Left cardiac atrium (tissue), 4 donors: ENCODE measurements at regions of chr3 and their contacts with region 1.

Region 1: DNA sequence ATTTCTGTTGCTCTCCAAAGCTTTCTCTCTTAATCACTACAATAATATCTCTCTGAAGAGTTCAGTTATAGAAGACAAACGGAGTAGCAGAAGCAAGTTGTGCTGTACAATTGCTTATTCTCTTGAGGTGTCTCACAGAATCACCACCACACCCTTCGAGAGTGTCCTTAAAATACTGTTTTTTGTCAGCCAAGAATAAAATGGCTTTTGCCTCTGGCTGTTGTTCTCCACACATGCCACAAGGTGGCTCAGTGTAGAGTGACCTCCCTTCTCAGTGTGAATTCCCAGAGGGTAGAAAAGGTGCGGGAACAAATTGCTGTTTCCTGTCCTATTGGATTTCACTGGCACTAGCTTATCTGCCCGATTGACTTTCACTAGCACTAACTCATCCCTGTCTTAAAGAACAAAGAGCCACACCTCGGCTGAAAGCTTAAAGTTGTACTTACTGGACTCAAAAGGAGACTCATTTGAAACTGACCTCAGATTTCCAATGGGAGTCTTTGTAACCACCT is 134.2 kb upstream of the SATB1 start:
- DNase-seq: no peak
- ATAC-seq: peak; percentile 38 to 59

Region 2: GRCh38 chr3:18512007-18512406 is 47.4 kb before region 1 on chr3:
- intact Hi-C with region 1: no loop called
- DNase-seq: no peak
- ATAC-seq: no peak

Region 3: DNA sequence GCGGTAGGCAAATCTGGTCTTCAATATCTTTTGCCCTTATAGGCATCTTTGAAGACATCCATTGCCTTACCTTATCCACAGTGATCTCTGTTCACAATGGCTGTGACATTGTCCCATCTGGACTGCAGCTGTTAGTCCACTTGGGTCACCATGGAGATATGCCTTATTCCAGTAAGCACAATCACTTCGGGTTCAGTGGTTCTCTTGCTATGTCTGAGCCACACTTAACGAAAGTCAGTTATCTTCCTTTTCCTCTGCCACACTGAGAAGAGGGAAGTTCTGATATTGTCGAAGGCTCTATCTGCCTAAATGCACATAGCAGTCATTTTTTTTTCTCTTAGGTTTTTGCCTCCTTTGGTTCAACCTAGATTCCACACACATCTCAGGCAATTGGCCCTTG is 15.2 kb before region 1 on chr3:
- intact Hi-C with region 1: no loop called
- DNase-seq: no peak
- ATAC-seq: no peak

Region 4: GRCh38 chr3:18712713-18713576 is 153.6 kb after region 1 on chr3:
- intact Hi-C with region 1: no loop called
- DNase-seq: no peak
- ATAC-seq: no peak

Region 5: DNA sequence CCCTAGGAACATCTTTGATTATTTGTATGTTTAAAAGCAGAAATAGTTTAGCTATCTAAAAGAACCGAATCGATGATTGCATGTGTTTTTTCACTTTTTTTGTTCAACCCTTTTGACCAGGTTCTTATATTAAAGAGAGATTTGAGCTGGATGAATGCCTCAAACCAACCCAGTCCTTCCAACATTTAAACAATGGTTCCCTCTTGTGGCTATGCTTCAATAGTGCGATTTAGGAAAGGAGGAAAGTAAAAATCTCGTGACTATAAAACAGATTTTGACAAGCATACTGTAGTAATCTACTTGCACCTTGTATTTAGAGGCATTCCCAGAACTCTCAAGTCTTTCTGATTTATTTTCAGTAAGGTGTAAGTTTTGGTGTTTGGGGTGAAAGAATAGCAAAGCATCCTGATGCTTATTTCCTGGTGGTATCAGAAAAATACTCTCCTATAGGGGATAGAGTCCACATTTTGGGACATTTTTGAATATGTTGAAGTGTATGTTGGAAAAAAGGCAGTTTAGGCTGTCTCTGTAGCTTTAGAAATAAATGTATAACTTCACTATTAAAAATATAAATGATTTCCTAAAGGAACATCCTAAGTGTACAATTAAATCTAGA is 429.3 kb after region 1 on chr3:
- intact Hi-C with region 1: loop called in 1 of 2 experiments (anchors 5 kb)
- DNase-seq: no peak
- ATAC-seq: peak in 1 of 2 donors; percentile 35

Region 6: GRCh38 chr3:19030522-19030839 is 471.1 kb after region 1 on chr3:
- intact Hi-C with region 1: loop called in 1 of 2 experiments (anchors 5 kb)
- DNase-seq: no peak
- ATAC-seq: peak in 1 of 2 donors; percentile 19